Mucosa of descending colon (tissue), 3 donors: ENCODE measurements at regions of chr1 and their contacts with region 1.

Region 1: GRCh38 chr1:44008259-44008658 is 16.9 kb downstream of the CCDC24 start:
- DNase-seq: no peak
- ATAC-seq: no peak
- H3K4me3 ChIP-seq: no peak overlapping the region
- H3K4me1 ChIP-seq: peaks cover 22% of the 10 kb centered on the region
- CTCF ChIP-seq: no peak

Region 2: DNA sequence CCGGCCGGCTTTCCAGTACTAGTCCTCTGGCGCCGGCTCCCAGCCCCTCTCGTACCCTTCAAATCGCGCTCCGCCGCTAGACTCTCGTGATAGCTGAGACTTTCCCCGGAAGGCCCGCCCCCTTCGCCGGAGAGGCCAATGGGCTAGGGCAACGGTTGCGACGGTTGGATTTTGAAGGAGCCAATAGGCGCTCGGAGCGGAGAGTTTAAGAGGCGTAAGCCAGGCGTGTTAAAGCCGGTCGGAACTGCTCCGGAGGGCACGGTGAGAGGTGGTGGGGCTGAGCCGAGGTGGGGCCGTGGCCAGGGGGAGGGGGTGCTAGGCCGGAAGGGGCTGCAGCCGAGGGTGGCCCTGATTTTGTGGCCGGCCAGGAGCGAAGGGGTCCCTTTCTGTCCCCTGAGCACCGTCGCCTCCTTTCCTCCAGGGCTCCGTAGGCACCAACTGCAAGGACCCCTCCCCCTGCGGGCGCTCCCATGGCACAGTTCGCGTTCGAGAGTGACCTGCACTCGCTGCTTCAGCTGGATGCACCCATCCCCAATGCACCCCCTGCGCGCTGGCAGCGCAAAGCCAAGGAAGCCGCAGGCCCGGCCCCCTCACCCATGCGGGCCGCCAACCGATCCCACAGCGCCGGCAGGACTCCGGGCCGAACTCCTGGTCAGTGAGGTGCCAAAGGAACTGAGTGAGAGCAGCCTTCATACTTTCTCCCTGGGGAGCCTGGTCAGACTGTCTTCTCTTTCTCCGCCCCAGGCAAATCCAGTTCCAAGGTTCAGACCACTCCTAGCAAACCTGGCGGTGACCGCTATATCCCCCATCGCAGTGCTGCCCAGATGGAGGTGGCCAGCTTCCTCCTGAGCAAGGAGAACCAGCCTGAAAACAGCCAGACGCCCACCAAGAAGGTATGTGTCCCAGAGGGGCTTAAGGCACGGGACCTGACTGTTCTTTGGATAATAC is 649.2 kb before region 1 on chr1 and contains the start of gene CDC20:
- intact Hi-C with region 1: no loop called
- DNase-seq: peak; percentile 99 to 100 (median 99)
- ATAC-seq: peak; percentile 96
- H3K4me3 ChIP-seq: peak within 1 kb of the TSS; percentile 1
- H3K4me1 ChIP-seq: peaks cover 22% of the 10 kb centered on the region
- CTCF ChIP-seq: no peak
- total RNA-seq, gene CDC20: 5.8 to 44.0 (median 8.5) TPM

Region 3: GRCh38 chr1:43814401-43814800 is 193.9 kb before region 1 on chr1:
- intact Hi-C with region 1: no loop called
- DNase-seq: no peak
- ATAC-seq: no peak
- H3K4me3 ChIP-seq: no peak overlapping the region
- H3K4me1 ChIP-seq: no peaks in the 10 kb centered on the region
- CTCF ChIP-seq: no peak

Region 4: GRCh38 chr1:43868741-43869067 is 139.6 kb before region 1 on chr1:
- intact Hi-C with region 1: no loop called
- DNase-seq: peak in 1 of 3 donors; percentile 25
- ATAC-seq: no peak
- H3K4me3 ChIP-seq: no peak overlapping the region
- H3K4me1 ChIP-seq: no peaks in the 10 kb centered on the region
- CTCF ChIP-seq: no peak

Region 5: DNA sequence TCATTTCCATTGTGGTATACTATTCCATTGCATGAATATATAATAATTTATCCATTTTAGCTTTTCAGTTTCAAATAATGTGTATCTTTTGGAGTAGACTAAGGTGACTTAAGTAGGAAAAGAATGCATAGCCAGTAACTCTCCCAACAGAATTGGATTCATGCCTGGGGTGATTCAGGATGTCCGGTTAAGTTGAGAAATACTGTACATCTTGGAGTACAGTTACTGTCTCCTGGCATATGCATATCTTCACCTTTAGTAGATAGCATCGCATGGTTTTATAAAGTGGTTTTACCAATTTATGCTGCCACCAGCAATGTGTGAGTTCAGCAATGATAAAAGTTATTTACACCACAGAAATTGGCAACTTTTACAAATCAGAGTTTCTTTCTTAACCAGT is 41.6 kb after region 1 on chr1:
- intact Hi-C with region 1: loop called in 1 of 2 experiments (anchors 5 kb)
- DNase-seq: no peak
- ATAC-seq: no peak
- H3K4me3 ChIP-seq: no peak overlapping the region
- H3K4me1 ChIP-seq: no peaks in the 10 kb centered on the region
- CTCF ChIP-seq: no peak

Region 6: GRCh38 chr1:44154047-44154446 is 145.8 kb after region 1 on chr1:
- intact Hi-C with region 1: no loop called
- DNase-seq: no peak
- ATAC-seq: no peak
- H3K4me3 ChIP-seq: no peak overlapping the region
- H3K4me1 ChIP-seq: no peaks in the 10 kb centered on the region
- CTCF ChIP-seq: no peak